Cardiac septum (tissue), 1 donor: ENCODE measurements at regions of chr4 and their contacts with region 1.

Region 1: GRCh38 chr4:181528570-181529184 is 714.5 kb upstream of the TENM3 start:
- DNase-seq: no peak

Region 2: DNA sequence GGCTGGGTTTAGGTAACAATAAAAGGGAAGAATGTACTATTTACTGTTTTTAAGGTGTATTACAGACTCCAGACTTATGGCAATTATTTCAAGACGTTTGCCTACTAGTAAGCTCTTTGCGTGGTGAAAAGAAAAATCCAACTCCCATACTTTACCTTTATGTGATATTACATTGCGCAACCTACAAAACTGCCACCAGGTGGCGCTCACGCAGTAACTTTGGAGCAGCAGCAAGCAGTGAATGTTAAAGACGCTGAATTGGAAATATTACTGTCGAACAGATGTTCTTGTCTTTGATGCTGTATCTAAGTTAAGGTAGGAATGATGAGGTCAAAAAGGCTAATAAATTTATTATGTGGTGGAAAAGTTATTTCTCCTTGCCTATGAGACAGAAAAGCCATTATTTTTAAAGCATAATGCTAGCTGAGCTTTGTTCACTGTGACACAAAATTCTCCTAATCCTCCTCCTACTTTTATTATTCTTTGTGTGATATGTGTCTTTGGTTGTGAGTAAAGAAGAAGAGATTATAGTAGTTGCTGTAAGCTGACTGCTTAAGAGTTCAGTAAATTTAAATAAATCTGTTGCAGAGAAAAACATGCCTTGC is 385.3 kb before region 1 on chr4:
- intact Hi-C with region 1: loop called (anchors 2 kb)
- DNase-seq: no peak

Region 3: GRCh38 chr4:181261279-181261678 is 267.4 kb before region 1 on chr4:
- intact Hi-C with region 1: loop called (anchors 5 kb)
- DNase-seq: no peak

Region 4: GRCh38 chr4:181301735-181302710 is 226.7 kb before region 1 on chr4:
- intact Hi-C with region 1: loop called (anchors 10 kb)
- DNase-seq: no peak

Region 5: GRCh38 chr4:181766061-181766548 is 237.4 kb after region 1 on chr4:
- intact Hi-C with region 1: no loop called
- DNase-seq: no peak

Region 6: DNA sequence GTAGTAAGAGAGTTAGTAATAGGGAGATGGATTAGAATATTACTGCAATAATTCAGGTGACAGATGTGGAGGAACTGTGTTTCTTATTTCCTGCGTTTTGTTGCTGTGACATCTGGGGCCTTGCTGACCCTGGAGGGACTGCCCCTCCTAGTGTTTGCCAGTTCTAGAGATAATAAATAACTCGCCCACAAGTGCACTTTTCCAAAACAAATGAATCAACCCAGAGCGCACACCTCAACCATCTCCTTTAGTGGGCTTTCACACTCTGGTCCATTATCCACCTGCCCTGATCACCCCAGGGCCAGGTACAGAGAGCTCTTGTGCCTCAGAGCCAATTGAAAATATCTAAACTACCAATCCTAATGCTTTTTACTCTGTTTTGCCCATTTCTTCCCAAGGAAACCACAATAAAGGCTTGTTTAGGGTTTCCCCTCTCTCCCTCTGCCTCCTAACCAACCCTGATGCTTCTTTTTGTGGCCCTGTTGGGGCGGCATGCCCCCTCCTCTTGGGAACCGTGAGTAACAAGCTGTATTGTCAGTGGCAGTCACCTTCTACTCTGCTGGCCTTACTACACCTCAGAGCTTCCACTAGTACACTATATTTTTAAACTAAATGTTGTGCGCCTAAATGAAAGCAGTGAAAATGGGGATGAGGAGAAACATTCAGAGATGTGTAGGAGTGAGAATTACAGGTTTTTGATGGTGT is 985.1 kb after region 1 on chr4:
- intact Hi-C with region 1: no loop called
- DNase-seq: no peak